Endothelial cell of umbilical vein (primary cell): ENCODE measurements at regions of chr4 and their contacts with region 1.

Region 1: GRCh38 chr4:82721819-82722423 is 76.7 kb downstream of the SCD5 start:
- DNase-seq: peak; percentile 38
- H3K4me3 ChIP-seq: no peak overlapping the region
- H3K27ac ChIP-seq: no peak overlapping the region
- H3K4me1 ChIP-seq: peaks cover 5% of the 10 kb centered on the region
- H3K27me3 ChIP-seq: no peaks in the 10 kb centered on the region
- CTCF ChIP-seq: peak; percentile 16 to 44
- POLR2A ChIP-seq: no peak

Region 2: GRCh38 chr4:81600520-81601357 is 1121.2 kb before region 1 on chr4:
- CTCF ChIA-PET with region 1: no interaction called
- POLR2A ChIA-PET with region 1: no interaction called
- dilution Hi-C with region 1: no loop called
- intact Hi-C with region 1: no loop called
- DNase-seq: no peak
- H3K4me3 ChIP-seq: no peak overlapping the region
- H3K27ac ChIP-seq: no peak overlapping the region
- H3K4me1 ChIP-seq: no peaks in the 10 kb centered on the region
- H3K27me3 ChIP-seq: no peaks in the 10 kb centered on the region
- CTCF ChIP-seq: no peak
- POLR2A ChIP-seq: no peak

Region 3: DNA sequence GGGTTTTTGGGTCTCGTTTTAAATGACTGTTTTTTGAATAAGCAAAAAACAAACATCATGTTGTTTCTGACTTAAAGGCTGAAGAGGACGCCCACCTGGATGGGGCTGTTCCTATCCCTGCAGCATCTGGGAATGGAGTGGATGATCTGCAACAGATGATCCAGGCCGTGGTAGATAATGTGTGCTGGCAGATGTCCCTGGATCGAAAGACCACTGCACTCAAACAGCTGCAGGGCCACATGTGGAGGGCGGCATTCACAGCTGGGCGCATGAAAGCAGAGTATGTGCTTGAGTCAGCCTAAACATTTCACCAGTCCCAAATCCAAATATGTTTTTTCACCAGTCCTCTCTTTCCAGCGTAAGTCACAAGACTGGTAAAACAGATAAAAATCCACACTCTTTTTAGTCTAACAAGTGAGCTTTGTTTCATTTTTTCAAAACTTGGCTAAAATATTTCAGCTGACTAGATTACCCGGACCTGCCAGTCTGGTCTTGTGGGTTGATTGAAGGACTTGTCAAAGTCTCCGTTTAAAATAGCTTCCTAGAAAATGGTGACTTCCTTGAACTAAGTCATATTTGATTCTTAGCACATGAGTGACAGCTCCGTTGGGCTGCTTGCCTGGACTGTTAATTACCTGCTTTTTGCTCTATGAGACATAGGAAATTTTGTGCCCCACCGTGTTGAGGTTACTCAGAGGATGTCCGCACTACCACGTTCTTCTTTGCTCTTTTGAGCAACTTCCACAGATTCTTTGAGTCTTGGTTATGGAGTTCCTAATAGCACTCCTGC is 270.8 kb before region 1 on chr4:
- CTCF ChIA-PET with region 1: no interaction called
- POLR2A ChIA-PET with region 1: no interaction called
- dilution Hi-C with region 1: loop called (anchors 10 kb)
- intact Hi-C with region 1: no loop called
- DNase-seq: no peak
- H3K4me3 ChIP-seq: no peak overlapping the region
- H3K27ac ChIP-seq: no peak overlapping the region
- H3K4me1 ChIP-seq: no peaks in the 10 kb centered on the region
- H3K27me3 ChIP-seq: no peaks in the 10 kb centered on the region
- CTCF ChIP-seq: no peak
- POLR2A ChIP-seq: no peak

Region 4: DNA sequence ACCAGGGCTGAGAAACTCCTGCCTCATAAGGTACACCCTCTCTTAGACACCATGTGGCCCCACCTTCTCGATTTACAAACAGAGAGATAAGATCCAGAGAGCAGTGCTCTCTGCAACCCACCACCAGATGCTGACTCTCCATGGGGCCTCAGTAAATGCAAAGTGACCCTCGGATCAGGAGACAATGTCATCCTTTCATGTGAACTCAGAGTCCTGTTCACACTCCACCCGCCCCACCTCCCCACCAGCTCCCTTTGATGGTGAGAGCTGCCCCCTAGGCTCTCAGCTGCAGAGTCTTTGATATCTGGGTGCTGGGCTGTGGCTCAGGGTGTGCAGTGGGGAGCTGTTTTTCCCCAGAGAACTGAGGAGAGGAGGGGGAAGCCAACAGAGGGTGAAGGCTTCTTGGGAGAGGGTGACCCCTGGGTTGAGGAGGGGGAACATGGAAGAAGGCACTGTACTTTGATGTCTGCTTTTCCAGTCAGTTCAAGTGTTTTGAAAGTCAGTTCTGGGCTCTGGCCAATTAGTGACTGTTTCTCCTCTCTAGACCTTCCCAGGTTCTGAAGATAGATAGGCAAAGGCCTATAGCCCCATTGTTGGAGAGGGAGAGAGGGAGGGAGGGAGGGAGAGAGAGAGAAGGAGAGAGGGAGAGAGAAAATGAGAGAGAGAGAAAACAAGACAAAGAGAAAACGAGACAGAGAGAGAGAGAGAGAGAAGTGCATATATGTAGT is 11.6 kb before region 1 on chr4:
- CTCF ChIA-PET with region 1: interaction called, 15 read pairs
- POLR2A ChIA-PET with region 1: no interaction called
- dilution Hi-C with region 1: no loop called
- intact Hi-C with region 1: no loop called
- DNase-seq: peak; percentile 23
- H3K4me3 ChIP-seq: no peak overlapping the region
- H3K27ac ChIP-seq: no peak overlapping the region
- H3K4me1 ChIP-seq: peaks cover 20% of the 10 kb centered on the region
- H3K27me3 ChIP-seq: no peaks in the 10 kb centered on the region
- CTCF ChIP-seq: no peak
- POLR2A ChIP-seq: no peak

Region 5: DNA sequence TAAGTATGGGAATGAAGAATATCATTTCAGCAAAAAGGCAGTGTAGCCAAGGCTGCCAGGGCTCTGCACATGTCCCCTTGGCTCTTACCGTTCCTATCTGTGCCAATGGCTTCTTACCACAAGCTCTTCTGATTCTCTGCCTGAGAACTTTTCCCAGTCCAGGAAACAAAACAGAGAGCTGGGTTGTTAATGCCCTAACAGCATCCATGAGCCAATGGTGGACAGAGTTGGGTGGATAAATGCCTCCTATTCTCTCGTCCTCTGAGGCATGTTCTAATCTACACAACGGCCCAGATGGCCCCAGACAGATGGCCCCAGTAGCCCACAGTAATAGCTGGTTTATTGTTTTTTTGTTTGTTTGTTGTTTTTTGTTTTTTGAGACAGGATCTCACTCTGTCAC is 48.7 kb after region 1 on chr4:
- CTCF ChIA-PET with region 1: no interaction called
- POLR2A ChIA-PET with region 1: no interaction called
- dilution Hi-C with region 1: no loop called
- intact Hi-C with region 1: no loop called
- DNase-seq: no peak
- H3K4me3 ChIP-seq: no peak overlapping the region
- H3K27ac ChIP-seq: no peak overlapping the region
- H3K4me1 ChIP-seq: no peaks in the 10 kb centered on the region
- H3K27me3 ChIP-seq: no peaks in the 10 kb centered on the region
- CTCF ChIP-seq: no peak
- POLR2A ChIP-seq: no peak